GM10248 (cell line): ENCODE measurements at regions of chr2 and their contacts with region 1.

Region 1: DNA sequence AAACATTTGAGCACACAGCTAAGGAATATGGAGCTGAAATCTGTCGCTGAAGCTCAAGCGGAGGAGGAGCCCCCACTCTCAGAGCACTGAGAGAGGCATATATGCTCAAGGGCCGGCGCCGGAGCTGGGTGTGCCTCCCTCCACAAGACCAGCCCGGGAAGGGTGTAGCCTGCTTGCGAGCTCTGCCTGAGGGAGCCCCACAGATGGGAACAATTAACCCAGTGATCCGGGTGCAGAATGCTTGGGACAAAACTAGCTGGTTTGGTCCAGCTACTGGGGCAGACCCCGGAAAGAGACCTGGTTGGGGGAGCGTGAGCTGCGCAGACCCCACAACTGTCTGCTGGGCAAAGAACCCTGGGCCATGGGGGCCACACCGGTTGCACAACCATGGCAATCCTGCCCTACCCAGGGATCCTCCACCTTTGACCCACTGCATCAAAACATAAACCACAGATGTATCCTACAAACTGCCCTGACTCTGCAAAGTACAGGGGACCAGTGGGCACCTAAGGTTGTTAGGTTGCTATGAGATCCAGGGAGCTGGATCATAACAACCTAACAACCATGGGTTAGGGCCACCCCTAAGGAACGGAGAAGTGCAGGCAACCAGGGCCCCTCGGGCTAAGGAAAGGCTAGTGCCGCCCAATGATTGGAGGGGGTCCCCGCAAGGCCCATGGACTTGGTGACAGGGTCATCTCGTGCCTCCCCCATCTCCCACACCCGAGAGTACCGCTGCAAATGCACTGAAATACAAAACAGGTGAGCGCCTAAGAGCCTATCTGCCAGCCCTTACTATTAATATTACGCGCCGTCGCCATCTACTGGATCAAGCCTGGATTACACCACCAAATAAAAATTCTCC is 53.4 kb upstream of the SCN1A start:
- DNase-seq: peak; percentile 44
- CTCF ChIP-seq: peak; percentile 63

Region 2: GRCh38 chr2:166057370-166058164 is 123.6 kb before region 1 on chr2:
- CTCF ChIA-PET with region 1: interaction called, 12 read pairs
- POLR2A ChIA-PET with region 1: no interaction called
- DNase-seq: no peak
- CTCF ChIP-seq: peak; percentile 7

Region 3: DNA sequence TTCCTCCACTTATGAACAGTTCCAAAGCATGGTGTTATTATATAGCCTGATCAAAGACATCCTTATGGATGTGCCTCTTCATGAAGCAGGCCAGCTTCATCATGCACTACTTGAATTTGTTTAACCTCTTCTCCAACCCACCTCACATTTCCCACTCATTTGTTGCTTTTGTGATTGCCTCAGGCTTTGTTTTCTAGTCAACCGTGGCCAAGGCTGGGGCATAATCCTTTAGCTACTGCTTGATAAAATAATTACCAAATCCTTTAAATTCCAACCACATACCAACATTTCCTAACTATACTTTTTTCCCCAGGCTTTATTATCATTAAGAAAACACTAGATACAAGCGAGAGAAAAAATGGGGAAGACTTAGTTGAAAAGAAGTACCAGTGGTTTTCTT is 13.7 kb before region 1 on chr2:
- CTCF ChIA-PET with region 1: interaction called, 11 read pairs
- POLR2A ChIA-PET with region 1: no interaction called
- DNase-seq: no peak
- CTCF ChIP-seq: no peak

Region 4: GRCh38 chr2:166193407-166193806 is 12.2 kb after region 1 on chr2:
- CTCF ChIA-PET with region 1: interaction called, 18 read pairs
- POLR2A ChIA-PET with region 1: no interaction called
- DNase-seq: no peak
- CTCF ChIP-seq: no peak